Lower leg skin (tissue), 4 donors: ENCODE measurements at regions of chr14 and their contacts with region 1.

Region 1: DNA sequence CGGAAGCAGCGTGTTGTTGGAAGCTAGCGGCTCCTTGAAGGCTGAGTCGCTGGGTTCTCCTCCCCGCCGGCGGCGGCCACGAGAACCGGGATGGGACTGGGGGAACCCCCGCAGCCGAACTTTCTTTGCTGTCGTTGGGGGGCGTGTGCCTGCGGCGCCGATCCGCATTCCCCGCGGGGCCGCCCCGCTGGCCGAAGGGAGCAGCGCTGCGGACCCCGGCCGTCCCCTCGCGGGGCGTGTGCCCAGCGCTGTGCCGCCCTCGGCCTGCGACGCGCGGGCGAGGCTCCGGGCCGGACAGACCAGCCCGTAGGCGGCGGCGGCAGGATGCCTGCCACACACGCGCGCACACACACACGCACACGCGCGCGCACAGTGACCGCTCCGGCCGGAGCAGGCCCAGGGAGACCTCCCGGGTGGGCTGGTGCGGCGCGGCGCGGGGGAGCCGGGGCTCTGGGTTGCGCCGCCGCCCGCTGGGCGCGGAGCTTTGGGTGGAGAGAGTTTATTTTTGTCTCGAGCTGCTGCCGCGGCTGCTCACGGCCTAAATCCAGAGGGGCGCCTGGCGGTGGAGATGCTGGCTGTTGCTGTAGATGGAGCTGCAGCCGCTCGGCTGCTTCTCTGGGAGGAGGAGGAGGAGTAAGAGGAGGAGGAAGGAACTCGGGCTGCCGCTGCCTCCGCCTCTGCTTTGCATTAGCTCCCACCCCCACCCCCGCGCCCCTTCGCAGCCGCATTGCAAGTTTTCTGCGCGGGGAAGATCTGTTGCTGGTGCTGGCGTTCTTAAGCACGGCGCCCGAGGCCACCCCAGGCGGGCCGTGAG is at the start of gene SAMD4A:
- DNase-seq: peak; percentile 73 to 96
- H3K4me3 ChIP-seq: peak within 1 kb of the TSS; percentile 53
- CTCF ChIP-seq: no peak
- POLR2A ChIP-seq: no peak
- total RNA-seq, gene SAMD4A: 7.9 to 18.7 (median 14.4) TPM

Region 2: GRCh38 chr14:54532111-54533012 is 34.3 kb before region 1 on chr14:
- intact Hi-C with region 1: no loop called
- DNase-seq: no peak
- H3K4me3 ChIP-seq: no peak overlapping the region
- CTCF ChIP-seq: no peak
- POLR2A ChIP-seq: no peak

Region 3: GRCh38 chr14:54691525-54692283 is 125.1 kb after region 1 on chr14:
- intact Hi-C with region 1: loop called (anchors 10 kb)
- DNase-seq: peak; percentile 71 to 94
- H3K4me3 ChIP-seq: no peak overlapping the region
- CTCF ChIP-seq: peak in 1 of 3 donors; percentile 43
- POLR2A ChIP-seq: no peak

Region 4: GRCh38 chr14:54776361-54777001 is 209.9 kb after region 1 on chr14:
- intact Hi-C with region 1: loop called (anchors 2 kb)
- DNase-seq: peak; percentile 39 to 87
- H3K4me3 ChIP-seq: no peak overlapping the region
- CTCF ChIP-seq: no peak
- POLR2A ChIP-seq: no peak